ENCODE measurements at regions of chr19 and their contacts with region 1.

Region 1: DNA sequence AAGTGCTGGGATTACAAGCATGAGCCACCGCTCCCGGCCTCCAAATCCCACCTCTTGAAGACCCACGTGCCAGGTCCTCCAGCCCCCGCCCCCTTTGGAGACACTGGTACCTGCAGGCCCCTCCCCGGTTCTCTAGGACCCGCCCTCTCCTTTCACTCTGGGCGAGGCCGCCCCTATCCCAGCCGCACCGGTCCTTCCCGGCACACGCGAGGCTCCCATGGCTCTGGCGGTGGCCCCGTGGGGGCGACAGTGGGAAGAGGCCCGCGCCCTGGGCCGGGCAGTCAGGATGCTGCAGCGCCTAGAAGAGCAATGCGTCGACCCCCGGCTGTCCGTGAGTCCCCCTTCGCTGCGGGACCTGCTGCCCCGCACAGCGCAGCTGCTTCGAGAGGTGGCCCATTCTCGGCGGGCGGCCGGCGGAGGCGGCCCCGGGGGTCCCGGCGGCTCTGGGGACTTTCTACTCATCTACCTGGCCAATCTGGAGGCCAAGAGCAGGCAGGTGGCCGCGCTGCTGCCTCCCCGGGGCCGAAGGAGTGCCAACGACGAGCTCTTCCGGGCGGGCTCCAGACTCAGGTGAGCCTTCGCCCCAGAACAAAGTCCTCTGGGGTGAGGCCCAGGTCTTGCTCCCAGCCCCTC is at the start of gene CBLC:
- DNase-seq: no peak
- H3K4me3 ChIP-seq: no peak within 1 kb of the TSS
- CTCF ChIP-seq: no peak

Region 2: GRCh38 chr19:44607049-44607448 is 170.8 kb before region 1 on chr19:
- CTCF ChIA-PET with region 1: no interaction called
- POLR2A ChIA-PET with region 1: no interaction called
- DNase-seq: no peak
- H3K4me3 ChIP-seq: no peak overlapping the region
- CTCF ChIP-seq: no peak

Region 3: DNA sequence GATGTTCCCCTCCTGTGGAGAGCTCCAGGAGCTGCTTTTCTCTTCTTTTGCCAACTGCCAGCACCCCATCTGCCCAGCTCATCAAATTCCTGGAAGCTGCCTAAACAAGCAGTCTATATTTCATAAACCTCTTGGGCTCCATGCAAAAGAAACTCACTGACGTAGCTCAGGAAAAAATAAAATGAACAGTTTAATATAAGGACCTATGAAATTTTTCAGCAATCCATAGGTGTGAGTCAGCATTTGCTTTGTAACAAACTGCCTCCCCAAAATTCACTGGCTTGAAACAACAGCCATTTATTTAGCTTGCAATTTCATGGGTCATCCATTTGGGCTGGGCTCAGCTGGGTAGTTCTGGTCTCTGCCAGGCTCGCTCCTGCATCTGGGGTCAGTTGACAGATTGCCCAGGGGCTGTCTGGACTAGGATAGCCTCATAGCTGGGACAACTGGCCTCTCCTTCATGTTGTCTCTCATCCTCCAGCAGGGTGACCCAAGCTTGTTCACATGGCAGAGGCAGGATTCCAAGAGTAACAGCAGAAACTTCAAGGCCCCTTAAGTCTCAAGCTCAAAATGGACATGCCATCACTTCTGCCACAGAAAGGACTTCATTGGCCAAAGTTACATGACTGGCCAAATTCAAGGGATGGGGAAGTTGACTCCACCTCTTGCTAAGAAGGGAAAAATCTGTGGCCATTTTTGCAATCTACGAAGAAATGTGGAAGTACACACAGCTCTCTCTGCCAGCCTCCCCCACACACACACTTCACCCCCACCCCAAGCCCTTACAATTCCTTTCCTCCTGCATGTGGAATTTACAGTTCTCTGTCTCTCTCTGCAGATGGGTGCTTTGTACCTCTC is 142.0 kb before region 1 on chr19:
- CTCF ChIA-PET with region 1: no interaction called
- POLR2A ChIA-PET with region 1: no interaction called
- DNase-seq: no peak
- H3K4me3 ChIP-seq: no peak overlapping the region
- CTCF ChIP-seq: no peak

Region 4: GRCh38 chr19:44792281-44792680 is 14.4 kb after region 1 on chr19:
- CTCF ChIA-PET with region 1: interaction called, 115 read pairs
- POLR2A ChIA-PET with region 1: no interaction called
- DNase-seq: no peak
- H3K4me3 ChIP-seq: no peak overlapping the region
- CTCF ChIP-seq: no peak

Region 5: DNA sequence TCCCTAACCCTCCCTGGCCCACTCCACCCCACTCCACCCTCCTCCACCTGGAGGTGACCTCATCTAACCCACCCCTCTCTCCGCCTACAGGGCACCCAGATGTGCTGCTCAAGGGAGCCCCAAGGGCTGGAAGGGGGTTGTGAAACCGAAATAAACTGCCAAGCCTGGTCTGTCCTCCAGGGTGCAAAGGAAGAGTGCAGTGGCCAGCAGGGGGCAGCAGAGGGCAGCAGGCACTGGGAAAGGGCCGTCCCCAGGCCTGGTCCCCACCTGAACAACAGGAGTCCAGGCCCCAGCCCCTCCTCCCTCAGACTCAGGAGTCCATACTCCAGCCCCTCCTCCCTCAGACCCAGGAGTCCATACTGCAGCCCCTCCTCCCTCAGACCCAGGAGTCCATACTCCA is 22.6 kb after region 1 on chr19:
- CTCF ChIA-PET with region 1: interaction called, 52 read pairs
- POLR2A ChIA-PET with region 1: no interaction called
- DNase-seq: no peak
- H3K4me3 ChIP-seq: no peak overlapping the region
- CTCF ChIP-seq: peak; percentile 100

Region 6: DNA sequence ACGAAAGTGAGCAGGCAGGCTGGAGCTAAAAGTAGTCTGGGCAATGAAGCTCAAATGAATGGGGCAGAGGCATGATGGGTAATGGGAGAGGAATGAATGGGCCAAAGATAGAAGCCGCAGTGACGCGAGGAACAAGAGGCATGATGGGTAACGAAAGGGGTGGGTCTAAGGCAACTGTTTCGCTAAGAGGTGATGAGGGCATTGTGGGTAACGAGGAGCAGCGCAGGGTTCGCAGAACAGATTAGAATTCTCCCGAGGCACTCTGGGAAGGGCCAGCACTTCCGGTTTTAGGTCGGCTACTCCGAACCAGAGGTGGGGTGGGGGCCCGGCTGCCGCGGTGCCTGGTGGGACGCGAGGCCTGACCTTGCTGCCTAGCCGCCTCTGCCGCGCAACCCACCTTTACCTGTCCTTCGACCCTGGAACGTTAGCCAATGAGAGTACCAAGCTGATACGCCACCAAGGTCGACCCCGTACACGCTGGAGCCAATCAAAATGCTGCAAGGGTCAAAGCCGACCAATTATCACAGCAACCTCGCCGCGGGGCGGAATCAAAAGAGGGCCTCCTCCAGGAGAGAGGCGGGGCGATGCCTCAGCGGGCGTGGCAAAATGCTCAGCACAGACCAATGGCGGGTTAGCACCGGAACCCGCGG is 112.7 kb after region 1 on chr19:
- CTCF ChIA-PET with region 1: no interaction called
- POLR2A ChIA-PET with region 1: no interaction called
- DNase-seq: peak; percentile 98
- H3K4me3 ChIP-seq: peak overlapping the region; percentile 68
- CTCF ChIP-seq: no peak